ENCODE measurements at regions of chr2 and their contacts with region 1.

Region 1: GRCh38 chr2:118186110-118186857 is 98.0 kb downstream of the INSIG2 start:
- DNase-seq: peak; percentile 81
- ATAC-seq: peak; percentile 95
- H3K4me3 Mint-ChIP-seq: peak overlapping the region; percentile 97
- H3K27ac Mint-ChIP-seq: peak overlapping the region; percentile 98
- H3K4me1 Mint-ChIP-seq: peaks cover 16% of the 10 kb centered on the region
- H3K27me3 Mint-ChIP-seq: peaks cover under 1% of the 10 kb centered on the region
- CTCF ChIP-seq: no peak

Region 2: DNA sequence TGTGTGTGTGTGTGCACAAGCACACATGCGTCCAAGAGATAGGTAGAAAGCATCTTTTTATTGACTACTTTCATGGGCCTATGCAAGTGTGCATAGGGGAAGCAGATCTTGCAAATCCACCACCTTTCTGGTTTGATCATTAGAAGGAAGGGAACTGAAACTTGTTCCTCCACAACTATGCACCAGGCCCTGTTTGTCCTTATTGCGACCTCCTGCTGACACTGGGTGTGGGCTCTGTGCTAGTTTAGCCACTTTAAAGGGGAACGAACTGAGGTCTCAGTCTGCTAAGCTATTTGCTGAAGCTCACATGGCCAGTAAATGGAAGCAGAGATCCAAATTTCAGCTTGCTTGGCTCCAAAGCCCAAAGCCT is 130.1 kb before region 1 on chr2:
- CTCF ChIA-PET with region 1: no interaction called
- POLR2A ChIA-PET with region 1: interaction called, 5 read pairs
- intact Hi-C with region 1: loop called (anchors 2 kb)
- DNase-seq: peak; percentile 34
- ATAC-seq: peak; percentile 89
- H3K4me3 Mint-ChIP-seq: peak overlapping the region; percentile 66
- H3K27ac Mint-ChIP-seq: peak overlapping the region; percentile 90
- H3K4me1 Mint-ChIP-seq: peaks cover 63% of the 10 kb centered on the region
- H3K27me3 Mint-ChIP-seq: no peaks in the 10 kb centered on the region
- CTCF ChIP-seq: no peak

Measured in activated B cell treated with CpG ODN at 0.5 μM for 24 hours (primary cell).